OCI-LY7 (cell line): ENCODE measurements at regions of chr9 and their contacts with region 1.

Region 1: DNA sequence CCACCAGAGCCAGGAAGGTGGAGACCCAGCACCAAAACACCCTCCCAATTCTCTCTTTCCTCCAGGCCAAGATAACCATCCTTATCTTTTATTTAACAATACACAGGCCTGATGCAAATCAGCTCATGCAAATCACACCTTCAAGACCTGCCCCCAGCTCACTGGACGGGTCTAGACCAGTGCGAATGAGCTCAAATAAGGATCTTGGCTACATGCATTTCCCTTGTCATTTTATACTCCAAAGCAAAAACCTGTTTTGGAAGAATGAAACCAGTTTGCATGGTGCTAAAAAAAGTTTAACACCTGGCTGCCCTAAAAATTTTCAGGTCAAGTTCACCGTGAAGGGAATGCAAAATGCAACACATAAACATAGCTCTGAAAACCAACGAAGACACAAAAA is 31.8 kb upstream of the DAPK1 start:
- DNase-seq: peak; percentile 27
- H3K4me3 ChIP-seq: no peak overlapping the region
- H3K27ac ChIP-seq: peak overlapping the region; percentile 21
- H3K4me1 ChIP-seq: peaks cover 11% of the 10 kb centered on the region
- CTCF ChIP-seq: no peak

Region 2: GRCh38 chr9:87640385-87640795 is 174.6 kb after region 1 on chr9:
- CTCF ChIA-PET with region 1: no interaction called
- POLR2A ChIA-PET with region 1: no interaction called
- intact Hi-C with region 1: loop called (anchors 5 kb)
- DNase-seq: no peak
- H3K4me3 ChIP-seq: no peak overlapping the region
- H3K27ac ChIP-seq: no peak overlapping the region
- H3K4me1 ChIP-seq: peaks cover 8% of the 10 kb centered on the region
- CTCF ChIP-seq: no peak

Region 3: DNA sequence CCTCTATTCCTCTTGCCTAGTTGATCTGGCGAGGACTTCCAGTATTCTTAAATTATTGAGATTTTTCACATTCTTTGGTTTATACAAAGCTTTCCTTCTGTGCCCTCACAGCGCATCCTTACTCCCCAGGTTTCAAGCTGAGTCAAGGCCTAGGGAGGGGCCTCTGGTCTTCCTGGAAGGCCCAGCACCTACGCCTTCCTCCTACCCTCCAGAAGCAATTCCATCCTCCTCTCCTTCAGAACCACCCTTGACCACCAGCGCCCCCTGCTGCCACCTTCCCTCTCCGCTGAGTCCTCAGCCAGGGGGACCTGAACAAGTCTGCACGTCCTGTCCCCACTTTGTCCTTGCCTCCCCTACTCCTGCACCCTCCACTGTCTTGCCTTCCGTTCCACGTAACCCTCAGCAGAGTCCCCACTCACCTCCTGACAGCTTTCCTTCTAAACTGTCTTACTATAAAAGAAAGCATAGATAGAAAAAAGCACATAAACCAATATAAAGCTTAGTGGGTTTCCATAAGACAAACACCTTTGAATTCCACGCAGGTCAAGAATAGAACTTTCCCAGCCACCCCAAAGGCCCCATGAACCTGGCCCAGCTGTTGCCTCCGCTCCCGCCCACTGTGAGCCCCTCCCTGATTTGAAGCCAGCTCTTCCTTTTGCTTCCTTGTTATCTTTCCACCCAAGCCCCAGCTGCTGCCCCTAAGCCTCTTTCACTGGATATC is 197.1 kb after region 1 on chr9:
- CTCF ChIA-PET with region 1: no interaction called
- POLR2A ChIA-PET with region 1: no interaction called
- intact Hi-C with region 1: loop called (anchors 5 kb)
- DNase-seq: peak; percentile 60
- H3K4me3 ChIP-seq: no peak overlapping the region
- H3K27ac ChIP-seq: no peak overlapping the region
- H3K4me1 ChIP-seq: peaks cover 7% of the 10 kb centered on the region
- CTCF ChIP-seq: peak; percentile 82

Region 4: GRCh38 chr9:87798261-87798833 is 332.5 kb after region 1 on chr9:
- CTCF ChIA-PET with region 1: no interaction called
- POLR2A ChIA-PET with region 1: no interaction called
- intact Hi-C with region 1: no loop called
- DNase-seq: no peak
- H3K4me3 ChIP-seq: no peak overlapping the region
- H3K27ac ChIP-seq: no peak overlapping the region
- H3K4me1 ChIP-seq: no peaks in the 10 kb centered on the region
- CTCF ChIP-seq: no peak